ENCODE measurements at regions of chr2 and their contacts with region 1.

Region 1: GRCh38 chr2:88739985-88740600 is 48.6 kb downstream of the RPIA start:
- DNase-seq: peak; percentile 80
- ATAC-seq: peak; percentile 86
- H3K4me3 ChIP-seq: no peak overlapping the region
- H3K27ac ChIP-seq: no peak overlapping the region
- H3K4me1 ChIP-seq: peaks cover 8% of the 10 kb centered on the region; the same call in 1 of the 2 replicates
- H3K27me3 ChIP-seq: no peaks in the 10 kb centered on the region
- CTCF ChIP-seq: peak; percentile 97

Region 2: DNA sequence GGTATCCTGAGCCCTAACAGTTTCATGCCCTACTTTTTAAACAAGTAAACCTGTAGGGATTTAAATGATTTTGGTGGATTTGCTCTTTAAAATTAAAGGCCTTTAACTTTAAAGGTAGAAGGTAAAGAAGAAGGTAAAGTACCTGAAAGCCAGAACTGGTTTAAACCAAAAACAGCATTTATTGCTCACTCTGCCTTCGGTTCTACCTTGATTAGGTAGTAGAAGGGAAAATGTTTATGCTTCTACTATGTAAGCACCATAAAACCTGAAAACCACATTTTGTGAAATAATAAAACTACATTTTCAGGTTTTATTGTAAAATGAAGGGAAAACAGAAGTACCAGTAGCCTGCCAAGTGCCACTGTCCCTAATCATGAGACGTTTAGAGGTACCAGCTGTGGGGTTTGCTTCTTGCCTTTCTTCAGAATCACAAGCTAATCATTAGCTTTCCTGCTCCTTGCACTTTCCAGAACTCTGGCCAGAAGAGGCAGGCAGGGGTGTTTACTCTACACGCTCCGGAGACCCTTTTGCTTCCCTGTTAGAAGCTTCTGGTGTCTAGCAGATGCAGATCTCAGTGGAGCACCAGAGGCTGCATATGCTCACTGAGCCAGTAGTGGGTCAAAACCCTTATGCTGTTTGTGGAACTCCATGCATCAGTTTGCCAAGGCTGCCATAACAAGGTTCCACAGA is 15.3 kb before region 1 on chr2:
- CTCF ChIA-PET with region 1: no interaction called
- POLR2A ChIA-PET with region 1: no interaction called
- intact Hi-C with region 1: no loop called
- DNase-seq: no peak
- ATAC-seq: no peak
- H3K4me3 ChIP-seq: no peak overlapping the region
- H3K27ac ChIP-seq: no peak overlapping the region
- H3K4me1 ChIP-seq: no peaks in the 10 kb centered on the region
- H3K27me3 ChIP-seq: no peaks in the 10 kb centered on the region
- CTCF ChIP-seq: no peak

Region 3: GRCh38 chr2:88874063-88874657 is 134.1 kb after region 1 on chr2:
- CTCF ChIA-PET with region 1: no interaction called
- POLR2A ChIA-PET with region 1: no interaction called
- intact Hi-C with region 1: loop called (anchors 2 kb)
- DNase-seq: peak; percentile 76
- ATAC-seq: peak; percentile 85
- H3K4me3 ChIP-seq: no peak overlapping the region
- H3K27ac ChIP-seq: no peak overlapping the region
- H3K4me1 ChIP-seq: no peaks in the 10 kb centered on the region
- H3K27me3 ChIP-seq: peaks cover 59% of the 10 kb centered on the region
- CTCF ChIP-seq: peak; percentile 90

Region 4: DNA sequence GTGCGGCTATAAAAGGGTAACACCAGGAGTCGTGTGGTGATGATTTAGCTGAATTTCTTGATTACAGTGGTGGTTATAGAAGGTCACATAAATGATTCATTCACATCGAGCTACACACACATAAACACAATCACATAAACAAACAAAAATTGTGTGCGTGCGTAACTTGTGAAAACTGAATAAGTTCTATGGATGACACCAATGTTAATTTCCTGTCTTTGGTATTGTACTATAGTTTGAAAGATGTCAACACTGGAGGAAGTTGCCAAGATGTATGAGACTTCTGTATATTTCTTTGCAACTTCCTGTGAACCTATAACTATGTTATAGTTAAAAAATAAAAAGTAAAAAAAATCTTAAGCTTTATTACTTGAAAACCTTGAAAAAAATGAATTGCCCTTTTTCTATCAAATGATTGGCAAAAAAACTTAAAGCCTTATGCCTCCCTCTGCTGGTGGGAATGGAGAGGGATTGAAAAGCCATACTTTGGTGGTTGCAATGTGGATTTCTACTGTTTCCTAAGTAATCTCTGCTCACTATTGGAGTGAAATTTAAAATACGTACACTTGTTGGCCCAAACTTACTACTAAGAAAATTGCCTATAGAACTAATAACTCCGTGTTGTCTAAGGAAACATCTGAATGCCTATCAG is 179.1 kb after region 1 on chr2:
- CTCF ChIA-PET with region 1: no interaction called
- POLR2A ChIA-PET with region 1: no interaction called
- intact Hi-C with region 1: loop called (anchors 1 kb)
- DNase-seq: peak; percentile 51
- ATAC-seq: peak; percentile 37; the same call in 1 of the 2 replicates
- H3K4me3 ChIP-seq: no peak overlapping the region
- H3K27ac ChIP-seq: no peak overlapping the region
- H3K4me1 ChIP-seq: no peaks in the 10 kb centered on the region
- H3K27me3 ChIP-seq: peaks cover 44% of the 10 kb centered on the region
- CTCF ChIP-seq: peak; percentile 74

Measured in PC-3 (cell line).